CD8-positive, alpha-beta T cell (primary cell): ENCODE measurements at regions of chr1 and their contacts with region 1.

Region 1: GRCh38 chr1:206912445-206913095 is 9.2 kb downstream of the FCMR start:
- DNase-seq: peak in 7 of 9 experiments; percentile 37 to 85 (median 67)
- ATAC-seq: peak; percentile 48
- H3K4me3 ChIP-seq: no peak overlapping the region
- H3K4me3 Mint-ChIP-seq: peak overlapping the region; percentile 69
- H3K27ac ChIP-seq: peak overlapping the region in 1 of 2 experiments; percentile 95
- H3K27ac Mint-ChIP-seq: peak overlapping the region; percentile 97
- H3K4me1 ChIP-seq: peaks cover 94% of the 10 kb centered on the region
- H3K4me1 Mint-ChIP-seq: peaks cover 91% of the 10 kb centered on the region
- H3K27me3 ChIP-seq: no peaks in the 10 kb centered on the region
- H3K27me3 Mint-ChIP-seq: no peaks in the 10 kb centered on the region
- CTCF ChIP-seq: peak; percentile 88

Region 2: GRCh38 chr1:206635080-206635977 is 277.2 kb before region 1 on chr1 and contains the start of gene DYRK3:
- CTCF ChIA-PET with region 1: interaction called, 3 read pairs
- POLR2A ChIA-PET with region 1: no interaction called
- intact Hi-C with region 1: loop called in 1 of 2 experiments (anchors 1 kb)
- DNase-seq: peak; percentile 63 to 94 (median 88)
- ATAC-seq: peak; percentile 94
- H3K4me3 ChIP-seq: peak within 1 kb of the TSS; percentile 58 to 79
- H3K4me3 Mint-ChIP-seq: peak within 1 kb of the TSS; percentile 85
- H3K27ac ChIP-seq: peak within 1 kb of the TSS; percentile 9 to 12
- H3K27ac Mint-ChIP-seq: peak within 1 kb of the TSS; percentile 70
- H3K4me1 ChIP-seq: peaks cover 15% of the 10 kb centered on the region
- H3K4me1 Mint-ChIP-seq: peaks cover 16% of the 10 kb centered on the region
- H3K27me3 ChIP-seq: no peaks in the 10 kb centered on the region
- H3K27me3 Mint-ChIP-seq: peaks cover 15% of the 10 kb centered on the region
- CTCF ChIP-seq: no peak
- total RNA-seq, gene DYRK3: 0.94 to 1.4 TPM

Region 3: GRCh38 chr1:206803221-206803730 is 109.3 kb before region 1 on chr1:
- CTCF ChIA-PET with region 1: interaction called, 106 read pairs
- POLR2A ChIA-PET with region 1: interaction called, 11 read pairs
- intact Hi-C with region 1: loop called in 1 of 2 experiments (anchors 1 kb)
- DNase-seq: peak; percentile 59 to 98 (median 74)
- ATAC-seq: peak; percentile 91
- H3K4me3 ChIP-seq: no peak overlapping the region
- H3K4me3 Mint-ChIP-seq: peak overlapping the region; percentile 40
- H3K27ac ChIP-seq: peak overlapping the region; percentile 51 to 83
- H3K27ac Mint-ChIP-seq: peak overlapping the region; percentile 96
- H3K4me1 ChIP-seq: peaks cover 46% of the 10 kb centered on the region
- H3K4me1 Mint-ChIP-seq: peaks cover 71% of the 10 kb centered on the region
- H3K27me3 ChIP-seq: no peaks in the 10 kb centered on the region
- H3K27me3 Mint-ChIP-seq: no peaks in the 10 kb centered on the region
- CTCF ChIP-seq: no peak

Region 4: DNA sequence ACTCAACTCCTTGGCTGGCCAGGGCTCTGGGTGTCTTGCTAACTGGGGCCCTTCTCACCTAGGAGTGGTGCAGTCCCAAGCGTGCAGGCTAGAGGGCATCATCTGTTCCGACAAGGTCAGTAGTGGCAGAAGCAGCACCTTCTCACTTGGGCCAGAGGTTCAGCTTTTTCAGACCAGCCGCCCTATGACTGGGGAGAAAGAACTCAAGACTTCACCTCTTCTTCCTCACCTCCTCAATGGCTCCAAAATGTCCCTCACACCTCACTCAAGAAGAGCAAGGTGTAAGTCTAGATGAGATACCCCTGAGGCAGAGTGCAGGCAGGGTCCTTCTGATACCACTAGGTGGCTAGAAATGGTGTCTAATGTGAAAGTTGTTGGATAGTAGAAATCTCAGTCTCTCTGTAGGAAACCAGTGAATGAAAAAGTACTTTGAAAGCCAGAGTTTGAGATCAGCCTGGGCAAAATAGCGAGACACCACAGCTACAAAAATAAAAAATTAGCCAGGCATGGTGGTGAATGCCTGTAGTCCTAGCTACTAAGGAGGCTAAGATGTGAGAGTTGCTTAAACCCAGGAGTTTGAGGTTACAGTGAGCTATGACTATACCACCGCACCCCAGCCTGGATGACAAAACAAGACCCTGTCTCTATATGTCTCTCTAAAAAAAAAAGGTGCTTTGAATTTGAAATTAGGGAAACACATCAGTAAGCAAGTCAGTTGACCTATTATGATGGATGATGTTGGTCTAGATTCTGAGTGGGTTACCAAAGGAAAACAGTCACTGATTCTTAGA is 55.7 kb before region 1 on chr1:
- CTCF ChIA-PET with region 1: interaction called, 37 read pairs
- POLR2A ChIA-PET with region 1: interaction called, 9 read pairs
- intact Hi-C with region 1: no loop called
- DNase-seq: peak in 4 of 9 experiments; percentile 16 to 53 (median 28)
- ATAC-seq: peak; percentile 55
- H3K4me3 ChIP-seq: no peak overlapping the region
- H3K4me3 Mint-ChIP-seq: no peak overlapping the region
- H3K27ac ChIP-seq: no peak overlapping the region
- H3K27ac Mint-ChIP-seq: no peak overlapping the region
- H3K4me1 ChIP-seq: peaks cover 4% of the 10 kb centered on the region
- H3K4me1 Mint-ChIP-seq: peaks cover 13% of the 10 kb centered on the region
- H3K27me3 ChIP-seq: no peaks in the 10 kb centered on the region
- H3K27me3 Mint-ChIP-seq: no peaks in the 10 kb centered on the region
- CTCF ChIP-seq: peak; percentile 33

Region 5: DNA sequence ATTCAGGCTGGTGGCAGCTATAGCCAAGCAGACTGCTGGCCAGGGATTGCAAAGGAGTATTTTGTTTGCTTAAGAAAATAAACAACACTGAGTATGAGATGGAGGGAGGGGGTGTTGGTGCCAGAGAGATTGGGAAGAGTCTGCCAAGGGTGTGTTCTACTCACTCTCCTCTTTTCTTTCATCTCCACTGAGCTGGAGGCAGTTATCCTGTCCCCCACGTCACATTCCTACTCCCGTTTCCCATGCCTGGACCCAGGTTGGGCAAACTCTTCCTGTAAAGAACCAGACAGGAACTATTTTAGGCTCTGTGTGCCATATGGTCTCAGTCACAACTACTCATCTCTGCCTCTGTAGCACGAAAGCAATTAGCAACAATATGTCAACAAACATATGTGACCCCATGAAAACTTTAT is 16.7 kb before region 1 on chr1:
- CTCF ChIA-PET with region 1: interaction called, 27 read pairs
- POLR2A ChIA-PET with region 1: interaction called, 312 read pairs
- intact Hi-C with region 1: no loop called
- DNase-seq: no peak
- ATAC-seq: no peak
- H3K4me3 ChIP-seq: no peak overlapping the region
- H3K4me3 Mint-ChIP-seq: no peak overlapping the region
- H3K27ac ChIP-seq: no peak overlapping the region
- H3K27ac Mint-ChIP-seq: no peak overlapping the region
- H3K4me1 ChIP-seq: peaks cover 18% of the 10 kb centered on the region
- H3K4me1 Mint-ChIP-seq: peaks cover 42% of the 10 kb centered on the region
- H3K27me3 ChIP-seq: no peaks in the 10 kb centered on the region
- H3K27me3 Mint-ChIP-seq: no peaks in the 10 kb centered on the region
- CTCF ChIP-seq: no peak

Region 6: GRCh38 chr1:207321079-207321789 is 408.7 kb after region 1 on chr1 and contains the start of gene CD55:
- CTCF ChIA-PET with region 1: no interaction called
- POLR2A ChIA-PET with region 1: no interaction called
- intact Hi-C with region 1: loop called in 1 of 2 experiments (anchors 10 kb)
- DNase-seq: peak; percentile 98 to 100 (median 99)
- ATAC-seq: peak; percentile 88
- H3K4me3 ChIP-seq: peak within 1 kb of the TSS; percentile 77 to 89
- H3K4me3 Mint-ChIP-seq: peak within 1 kb of the TSS; percentile 98
- H3K27ac ChIP-seq: peak within 1 kb of the TSS; percentile 94 to 98
- H3K27ac Mint-ChIP-seq: peak within 1 kb of the TSS; percentile 99
- H3K4me1 ChIP-seq: peaks cover 21% of the 10 kb centered on the region
- H3K4me1 Mint-ChIP-seq: peaks cover 44% of the 10 kb centered on the region
- H3K27me3 ChIP-seq: no peaks in the 10 kb centered on the region
- H3K27me3 Mint-ChIP-seq: no peaks in the 10 kb centered on the region
- CTCF ChIP-seq: peak; percentile 36
- total RNA-seq, gene CD55: 256 to 261 TPM